ENCODE measurements at regions of chr11 and their contacts with region 1.

Region 1: DNA sequence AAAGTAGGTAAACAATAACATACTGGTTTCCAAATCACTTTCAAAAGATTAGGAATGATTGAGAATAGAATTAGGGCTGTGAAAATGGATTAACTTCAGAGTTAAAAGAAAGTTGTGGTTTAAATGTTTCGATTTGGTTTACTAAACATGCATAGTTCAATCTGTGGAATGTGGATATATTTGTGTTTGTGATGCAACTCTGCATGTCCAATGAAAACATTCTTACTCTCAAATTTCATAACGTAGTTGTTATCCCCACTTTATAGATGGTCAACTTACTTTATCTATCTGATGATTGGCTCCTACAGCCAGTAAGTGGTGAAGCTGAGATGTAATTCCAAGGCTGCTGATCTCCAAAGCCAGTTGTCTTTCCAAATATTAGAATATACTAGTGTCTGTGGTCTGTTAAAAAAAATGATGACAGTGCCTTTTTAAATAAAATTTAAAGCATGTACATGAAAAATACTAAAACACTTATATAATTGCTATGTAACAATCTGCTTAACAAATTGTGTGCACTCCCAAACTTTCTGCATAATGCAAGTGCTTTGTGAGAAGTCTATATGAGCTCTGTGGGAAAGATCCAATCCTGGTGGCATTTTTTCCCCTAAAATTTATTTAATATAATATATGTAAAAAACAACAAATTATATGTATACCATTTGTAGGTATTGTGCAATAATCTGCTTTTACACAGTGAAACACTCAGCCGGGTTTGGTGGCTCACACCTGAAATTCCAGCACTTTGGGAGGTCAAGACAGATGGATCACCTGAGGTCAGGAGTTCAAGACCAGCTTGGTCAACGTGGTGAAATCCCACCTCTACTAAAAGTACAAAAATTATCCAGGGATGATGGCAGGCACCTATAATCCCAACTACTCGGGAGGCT is 9.7 kb upstream of the SIK3 start:
- DNase-seq: no peak
- ATAC-seq: no peak
- H3K4me3 ChIP-seq: no peak overlapping the region
- H3K27ac ChIP-seq: no peak overlapping the region
- H3K4me1 ChIP-seq: peaks cover 3% of the 10 kb centered on the region
- H3K27me3 ChIP-seq: no peaks in the 10 kb centered on the region
- CTCF ChIP-seq: no peak

Region 2: GRCh38 chr11:116787786-116788486 is 320.0 kb before region 1 on chr11 and contains the start of gene ZPR1:
- intact Hi-C with region 1: loop called (anchors 2 to 5 kb)
- DNase-seq: peak; percentile 84 to 93
- ATAC-seq: peak; percentile 83 to 95 (median 89)
- H3K4me3 ChIP-seq: peak within 1 kb of the TSS; percentile 98
- H3K27ac ChIP-seq: peak within 1 kb of the TSS; percentile 87
- H3K4me1 ChIP-seq: peaks cover 10% of the 10 kb centered on the region
- H3K27me3 ChIP-seq: no peaks in the 10 kb centered on the region
- CTCF ChIP-seq: no peak
- total RNA-seq, gene ZPR1: 41.4 to 63.2 (median 56.1) TPM

Region 3: GRCh38 chr11:116879800-116880625 is 227.9 kb before region 1 on chr11:
- intact Hi-C with region 1: loop called (anchors 2 to 5 kb)
- DNase-seq: no peak
- ATAC-seq: peak; percentile 72 to 85 (median 78)
- H3K4me3 ChIP-seq: no peak overlapping the region
- H3K27ac ChIP-seq: no peak overlapping the region
- H3K4me1 ChIP-seq: peaks cover 14% of the 10 kb centered on the region
- H3K27me3 ChIP-seq: no peaks in the 10 kb centered on the region
- CTCF ChIP-seq: peak; percentile 68

Measured in psoas muscle (tissue), 8 donors.